HepG2 (cell line): ENCODE measurements at regions of chr12 and their contacts with region 1.

Region 1: DNA sequence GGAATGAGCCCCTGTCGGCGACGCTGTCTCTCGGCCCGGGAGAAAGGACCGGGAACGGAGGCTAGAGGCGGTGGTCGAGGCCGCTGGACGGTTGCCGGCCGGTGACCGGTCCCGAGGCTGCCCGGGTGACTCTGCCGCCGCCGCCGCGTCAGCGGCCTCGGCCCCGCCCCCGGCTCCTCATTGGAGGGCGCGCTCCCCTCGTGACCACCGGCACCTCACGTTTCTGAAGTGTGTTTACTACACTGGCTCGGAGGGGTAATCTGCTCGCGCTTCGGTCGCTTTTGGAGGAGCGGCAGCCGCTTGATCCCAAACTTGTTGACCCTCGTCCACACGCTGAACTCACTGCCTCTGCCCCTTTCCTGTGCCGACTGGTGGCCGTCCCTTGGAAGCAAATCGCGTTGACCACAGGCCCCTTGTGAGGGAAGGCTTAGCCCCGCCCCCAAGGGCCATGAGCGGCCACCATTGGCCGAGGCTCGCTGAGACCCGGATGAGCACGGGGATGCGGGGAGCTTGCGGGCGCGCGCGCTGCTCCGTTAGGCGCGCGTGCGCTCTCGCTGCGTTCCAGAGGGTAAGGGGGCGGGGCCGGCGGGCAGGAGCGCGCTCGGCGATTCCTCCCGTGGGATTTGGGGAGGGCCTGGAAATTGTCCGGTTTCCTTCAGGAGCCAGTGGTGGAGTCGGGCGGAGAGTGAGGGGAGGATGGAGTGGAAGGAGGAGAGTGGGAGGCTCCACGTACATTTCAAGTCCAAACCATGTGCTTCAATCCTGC is at the start of gene CRY1:
- DNase-seq: peak; percentile 89
- ATAC-seq: peak; percentile 91
- H3K4me3 ChIP-seq: peak within 1 kb of the TSS; percentile 70 to 95 (median 78)
- H3K27ac ChIP-seq: peak within 1 kb of the TSS; percentile 99
- H3K4me1 ChIP-seq: peaks cover 24% of the 10 kb centered on the region
- H3K27me3 ChIP-seq: no peaks in the 10 kb centered on the region; a peak in 1 of 5 replicates
- CTCF ChIP-seq: no peak; the same call in 1 of the 2 replicates
- EP300 ChIP-seq: no peak
- POLR2A ChIP-seq: peak; percentile 65 to 85
- RAD21 ChIP-seq: no peak
- total RNA-seq, gene CRY1: 13.9 and 16.2 TPM in 2 replicates

Region 2: DNA sequence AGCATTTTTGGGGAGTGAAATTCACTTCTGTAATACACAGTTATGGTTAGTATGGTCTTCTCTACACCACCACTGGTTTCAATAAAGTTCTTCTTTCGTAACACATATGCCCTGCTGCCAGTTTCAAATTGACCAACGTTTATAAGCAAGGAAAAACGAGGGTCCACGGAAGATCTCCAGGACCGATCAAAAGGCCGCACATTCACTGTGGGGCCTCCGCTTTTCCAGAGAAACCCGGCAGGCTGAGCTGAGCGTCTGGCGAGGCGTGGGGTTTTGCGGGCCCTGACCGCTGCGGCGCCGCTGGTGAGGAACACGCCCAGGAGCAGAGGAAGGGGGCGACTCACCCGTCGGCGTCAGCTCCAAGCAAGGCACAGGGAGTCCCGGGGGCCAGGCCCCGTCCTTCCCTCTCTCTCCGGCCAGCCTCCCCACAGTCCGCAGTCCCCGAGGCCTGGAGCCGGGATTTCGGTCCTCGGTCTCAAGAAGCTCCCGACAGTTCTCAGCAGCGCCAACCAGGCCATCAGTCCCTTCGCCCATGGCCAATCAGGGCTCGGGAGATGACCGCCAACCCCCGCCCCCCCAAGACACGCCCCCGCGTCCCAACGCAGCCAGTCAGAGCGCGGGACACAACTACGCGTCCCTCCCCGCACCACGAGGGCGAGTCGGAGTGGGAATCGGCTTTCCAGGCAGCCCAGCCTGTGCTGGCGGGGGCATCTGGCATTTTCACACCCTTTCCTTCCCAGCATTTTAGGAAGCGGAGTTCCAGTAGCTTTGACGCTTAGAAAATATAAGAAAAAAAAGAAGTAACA is 106.8 kb before region 1 on chr12 and contains the start of gene MTERF2:
- CTCF ChIA-PET with region 1: no interaction called
- POLR2A ChIA-PET with region 1: interaction called, 7 read pairs
- in situ Hi-C with region 1: no loop called
- intact Hi-C with region 1: loop called (anchors 1 kb)
- DNase-seq: peak; percentile 90
- ATAC-seq: peak; percentile 94
- H3K4me3 ChIP-seq: peak within 1 kb of the TSS; percentile 70 to 90 (median 76)
- H3K27ac ChIP-seq: peak within 1 kb of the TSS; percentile 71
- H3K4me1 ChIP-seq: peaks cover 22% of the 10 kb centered on the region
- H3K27me3 ChIP-seq: no peaks in the 10 kb centered on the region; a peak in 1 of 5 replicates
- CTCF ChIP-seq: 0 out of 2 replicates have a peak, but pooled peaks have one; percentile 17
- EP300 ChIP-seq: no peak
- POLR2A ChIP-seq: peak in 1 of 2 experiments; percentile 89; a peak in 2 of 4 replicates
- RAD21 ChIP-seq: 0 out of 2 replicates have a peak, but pooled peaks have one; percentile 29
- total RNA-seq, gene MTERF2: 11.6 and 13.6 TPM in 2 replicates

Region 3: DNA sequence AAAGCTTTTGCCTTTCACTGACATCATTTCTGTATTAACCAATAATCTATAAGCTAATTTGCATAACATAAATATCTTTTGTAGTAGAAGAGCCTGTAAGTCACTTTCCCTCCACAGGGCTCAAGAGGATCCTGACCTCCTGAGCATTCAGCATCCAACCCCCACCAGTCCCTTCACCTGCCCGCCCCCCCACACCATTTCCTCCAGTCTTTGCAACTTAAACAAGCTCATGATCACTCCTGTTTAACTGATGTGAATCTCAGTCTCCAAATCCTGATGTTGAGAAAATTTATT is 11.8 kb after region 1 on chr12:
- CTCF ChIA-PET with region 1: interaction called, 11 read pairs
- POLR2A ChIA-PET with region 1: interaction called, 12 read pairs
- in situ Hi-C with region 1: no loop called
- intact Hi-C with region 1: loop called (anchors 1 kb)
- DNase-seq: no peak
- ATAC-seq: no peak
- H3K4me3 ChIP-seq: no peak overlapping the region
- H3K27ac ChIP-seq: no peak overlapping the region
- H3K4me1 ChIP-seq: peaks cover 47% of the 10 kb centered on the region
- H3K27me3 ChIP-seq: peaks cover 0 to 12% of the 10 kb centered on the region in 2 experiments; a peak in 1 of 5 replicates
- CTCF ChIP-seq: no peak
- EP300 ChIP-seq: no peak
- POLR2A ChIP-seq: no peak
- RAD21 ChIP-seq: no peak